Activated CD4-positive, alpha-beta T cell treated with anti-CD3 and anti-CD28 coated beads, Interleukin-2, amount 10 ng/mL, durations not matched to agents 24 days and 14 days (primary cell): ENCODE measurements at regions of chr18 and their contacts with region 1.

Region 1: GRCh38 chr18:11908182-11909060 is at the start of gene MPPE1:
- DNase-seq: peak; percentile 97
- H3K4me3 Mint-ChIP-seq: peak within 1 kb of the TSS; percentile 95
- H3K27ac Mint-ChIP-seq: peak within 1 kb of the TSS; percentile 94
- H3K4me1 Mint-ChIP-seq: peaks cover 19% of the 10 kb centered on the region
- H3K27me3 Mint-ChIP-seq: no peaks in the 10 kb centered on the region
- total RNA-seq, gene MPPE1: 39.2 and 45.8 TPM in 2 replicates

Region 2: DNA sequence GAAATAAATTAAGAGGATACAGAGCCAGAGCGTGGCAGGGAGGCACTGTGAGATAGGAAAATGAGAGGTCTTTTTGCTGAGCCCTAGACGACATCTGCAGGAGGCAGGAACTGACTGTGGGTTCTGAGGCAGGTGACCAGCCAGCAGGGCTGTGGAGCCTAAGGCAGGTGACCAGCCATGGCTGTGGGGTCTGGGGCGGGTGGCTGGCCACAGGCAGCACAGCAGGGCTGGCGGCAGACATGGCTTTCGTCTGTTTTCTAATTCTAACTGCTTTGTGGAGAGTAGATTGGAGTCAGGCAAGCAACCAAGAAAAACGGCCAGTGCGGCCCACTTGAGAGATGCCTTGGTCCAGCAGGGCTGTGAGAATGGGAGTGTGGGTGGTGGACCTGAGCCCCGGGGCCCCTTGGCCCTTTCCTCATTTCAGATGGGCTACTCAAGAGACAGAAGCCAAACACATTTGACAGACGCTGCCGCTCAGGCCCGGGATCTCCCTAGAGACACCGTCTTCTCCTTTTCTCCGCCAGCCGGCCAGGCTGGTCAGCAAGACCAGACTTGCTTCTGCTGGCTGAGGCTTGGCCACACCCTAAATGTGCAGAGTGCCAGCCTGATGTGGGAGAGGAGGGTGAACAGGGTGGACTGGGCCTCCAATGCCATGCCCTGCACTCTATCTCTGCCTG is 239.0 kb before region 1 on chr18:
- intact Hi-C with region 1: no loop called
- DNase-seq: no peak
- H3K4me3 Mint-ChIP-seq: no peak overlapping the region
- H3K27ac Mint-ChIP-seq: no peak overlapping the region
- H3K4me1 Mint-ChIP-seq: no peaks in the 10 kb centered on the region
- H3K27me3 Mint-ChIP-seq: no peaks in the 10 kb centered on the region

Region 3: GRCh38 chr18:11872479-11873136 is 35.8 kb before region 1 on chr18:
- intact Hi-C with region 1: no loop called
- DNase-seq: no peak
- H3K4me3 Mint-ChIP-seq: no peak overlapping the region
- H3K27ac Mint-ChIP-seq: no peak overlapping the region
- H3K4me1 Mint-ChIP-seq: peaks cover 2% of the 10 kb centered on the region
- H3K27me3 Mint-ChIP-seq: peaks cover 2% of the 10 kb centered on the region

Region 4: DNA sequence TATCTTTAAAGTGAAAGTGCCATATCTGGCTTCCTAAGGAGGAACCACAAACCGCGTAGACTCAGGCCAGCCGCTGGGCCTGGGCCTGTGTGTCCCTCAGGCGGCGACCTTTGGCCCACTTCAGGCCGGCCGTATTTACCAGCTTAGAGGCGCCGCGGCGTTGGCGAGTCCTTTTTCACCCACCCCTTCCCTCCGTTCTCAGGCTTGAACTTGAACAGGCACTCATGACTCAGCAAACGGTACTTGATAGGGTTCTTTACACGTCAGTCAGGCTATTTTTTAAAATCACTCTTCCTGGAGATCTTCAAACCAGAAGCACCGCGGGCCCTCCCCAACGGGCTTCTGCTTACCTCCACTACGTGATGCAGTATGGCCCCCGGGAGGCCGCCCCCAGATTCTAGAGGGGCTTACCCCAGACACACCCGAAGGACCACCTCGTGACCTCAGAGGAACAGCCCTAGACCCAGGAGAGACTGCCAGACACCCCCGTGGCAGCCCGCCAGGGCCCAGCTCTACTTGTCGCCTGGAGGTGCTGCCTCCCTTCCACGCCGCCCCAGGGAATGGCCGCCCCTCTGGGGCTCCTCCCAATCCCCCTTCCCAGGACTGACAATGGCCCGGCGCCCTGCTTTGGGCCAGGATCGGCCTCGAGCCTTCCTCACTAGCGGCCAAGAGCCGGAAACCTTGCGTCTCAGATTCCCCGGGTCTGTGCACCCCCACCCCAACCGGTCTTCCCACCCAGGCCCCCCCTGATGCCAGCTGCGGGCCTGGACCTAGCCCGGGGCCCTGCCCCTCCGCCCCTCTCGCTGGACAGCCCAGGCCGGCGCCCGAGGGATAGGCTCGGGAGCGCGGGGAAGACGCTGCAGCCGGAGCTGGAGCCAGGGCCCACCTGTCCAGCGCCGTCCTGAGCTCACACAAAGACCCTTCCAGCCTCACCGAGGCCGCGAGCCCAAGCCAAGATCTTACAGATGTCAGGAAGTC is 39.1 kb after region 1 on chr18:
- intact Hi-C with region 1: loop called (anchors 2 kb)
- DNase-seq: peak; percentile 86
- H3K4me3 Mint-ChIP-seq: peak overlapping the region; percentile 84
- H3K27ac Mint-ChIP-seq: peak overlapping the region; percentile 81
- H3K4me1 Mint-ChIP-seq: peaks cover 8% of the 10 kb centered on the region
- H3K27me3 Mint-ChIP-seq: no peaks in the 10 kb centered on the region

Region 5: DNA sequence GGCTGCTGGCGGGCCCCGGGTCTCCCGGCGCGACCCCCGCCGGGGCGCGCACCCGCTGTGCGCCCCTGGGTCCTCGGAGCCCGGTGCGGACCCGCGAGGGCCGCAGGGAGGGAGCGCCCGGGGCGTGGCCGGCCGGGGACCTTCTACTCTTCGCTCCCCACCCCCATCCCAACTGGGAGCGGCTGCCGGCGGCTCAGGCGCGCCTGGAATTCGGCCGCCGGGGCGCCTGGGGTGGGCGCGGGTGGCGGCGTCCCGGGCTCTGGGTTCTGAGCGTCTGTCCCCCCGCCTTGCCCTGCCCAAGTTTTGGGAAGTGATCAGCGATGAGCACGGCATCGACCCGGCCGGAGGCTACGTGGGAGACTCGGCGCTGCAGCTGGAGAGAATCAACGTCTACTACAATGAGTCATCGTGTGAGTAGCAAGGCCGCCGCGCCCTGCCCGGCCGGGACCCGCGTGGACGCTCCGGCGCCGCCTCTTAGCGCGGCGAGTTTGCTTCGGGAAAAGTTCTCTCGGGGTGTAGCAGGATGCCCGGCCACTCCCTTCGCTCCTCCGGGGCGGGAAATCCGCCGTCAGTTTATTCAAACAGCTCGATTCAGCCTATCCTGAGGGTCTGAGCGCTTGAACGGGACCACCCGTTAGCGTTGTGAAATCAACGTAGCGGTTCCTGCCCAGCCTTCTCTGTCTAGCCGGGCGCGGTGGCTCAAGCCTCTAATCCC is 400.1 kb after region 1 on chr18:
- intact Hi-C with region 1: loop called (anchors 2 kb)
- DNase-seq: peak; percentile 79
- H3K4me3 Mint-ChIP-seq: peak overlapping the region; percentile 82
- H3K27ac Mint-ChIP-seq: peak overlapping the region; percentile 60
- H3K4me1 Mint-ChIP-seq: peaks cover 16% of the 10 kb centered on the region
- H3K27me3 Mint-ChIP-seq: peaks cover 35% of the 10 kb centered on the region